Mammary epithelial cell (primary cell): ENCODE measurements at regions of chr7 and their contacts with region 1.

Region 1: GRCh38 chr7:90629297-90629918 is 33.3 kb downstream of the CDK14 start:
- DNase-seq: peak; percentile 44
- H3K4me3 ChIP-seq: no peak overlapping the region
- H3K27ac ChIP-seq: no peak overlapping the region
- H3K4me1 ChIP-seq: peaks cover 20% of the 10 kb centered on the region
- H3K27me3 ChIP-seq: no peaks in the 10 kb centered on the region
- CTCF ChIP-seq: peak; percentile 68 to 75

Region 2: DNA sequence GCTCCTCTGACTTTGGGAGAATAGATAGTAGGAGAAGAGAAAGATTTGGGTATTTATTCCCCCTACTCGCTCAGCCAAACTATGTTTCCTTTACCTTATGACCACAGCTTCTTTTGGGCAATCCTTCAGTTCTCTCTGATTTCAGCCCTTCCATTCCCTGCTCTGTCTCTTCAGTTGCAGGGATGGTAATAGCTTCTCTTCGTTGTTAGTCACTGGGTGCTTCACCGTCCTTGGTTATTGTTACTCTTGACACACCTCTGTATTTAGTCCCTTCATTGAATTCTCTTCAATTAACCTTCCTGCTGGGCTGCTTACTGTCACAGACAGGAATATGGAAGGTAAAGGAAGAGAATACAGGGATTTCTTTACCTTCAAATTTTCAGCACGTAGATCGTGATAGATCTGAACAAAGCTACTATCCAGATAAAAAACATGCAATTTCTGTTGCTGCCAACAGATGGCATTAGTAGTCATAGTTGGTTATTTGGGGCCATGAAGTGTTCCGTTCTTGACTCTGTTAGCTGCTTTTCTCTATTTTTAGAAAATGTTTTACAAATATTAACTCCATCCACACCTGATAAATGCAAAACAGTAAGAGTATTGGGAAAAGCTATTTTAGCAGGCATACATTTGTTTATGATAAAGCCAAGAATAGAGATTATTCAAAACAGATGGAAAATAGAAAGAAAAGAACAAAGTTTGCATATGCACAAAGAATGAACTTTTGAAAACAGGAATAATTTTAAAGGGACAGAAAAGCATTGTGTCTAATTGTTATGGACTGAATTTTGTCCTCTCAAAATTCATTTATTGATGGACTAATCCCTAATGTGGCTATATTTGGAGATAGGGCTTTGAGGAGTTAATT is 174.0 kb before region 1 on chr7:
- CTCF ChIA-PET with region 1: no interaction called
- dilution Hi-C with region 1: no loop called
- in situ Hi-C with region 1: loop called in 1 of 2 experiments (anchors 5 kb)
- intact Hi-C with region 1: loop called (anchors 1 kb)
- DNase-seq: peak; percentile 41
- H3K4me3 ChIP-seq: peak overlapping the region in 1 of 3 experiments; percentile 7
- H3K27ac ChIP-seq: no peak overlapping the region
- H3K4me1 ChIP-seq: no peaks in the 10 kb centered on the region
- H3K27me3 ChIP-seq: no peaks in the 10 kb centered on the region
- CTCF ChIP-seq: peak; percentile 70 to 72

Region 3: DNA sequence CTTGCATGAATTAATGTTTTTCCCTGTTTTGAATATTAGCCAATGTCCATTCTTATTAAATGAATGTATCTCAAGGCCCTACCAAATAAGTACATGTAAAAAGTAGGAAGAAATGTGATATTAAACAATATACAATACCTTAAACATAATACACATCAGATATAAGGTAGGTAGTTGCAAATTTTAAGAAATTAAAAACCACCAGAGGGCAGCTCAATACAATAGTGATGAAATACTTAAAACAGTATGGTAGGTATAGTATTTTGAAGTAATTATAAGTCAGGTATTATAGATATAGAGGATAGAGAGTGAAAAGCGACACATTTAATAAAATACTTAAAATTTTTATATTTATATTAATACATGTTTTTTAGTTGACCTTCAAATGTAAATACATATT is 76.9 kb before region 1 on chr7:
- CTCF ChIA-PET with region 1: no interaction called
- dilution Hi-C with region 1: no loop called
- in situ Hi-C with region 1: loop called in 1 of 2 experiments (anchors 10 kb)
- intact Hi-C with region 1: loop called (anchors 1 kb)
- DNase-seq: peak; percentile 10
- H3K4me3 ChIP-seq: no peak overlapping the region
- H3K27ac ChIP-seq: no peak overlapping the region
- H3K4me1 ChIP-seq: no peaks in the 10 kb centered on the region
- H3K27me3 ChIP-seq: no peaks in the 10 kb centered on the region
- CTCF ChIP-seq: peak; percentile 20 to 43